ENCODE measurements at regions of chr14 and their contacts with region 1.

Region 1: DNA sequence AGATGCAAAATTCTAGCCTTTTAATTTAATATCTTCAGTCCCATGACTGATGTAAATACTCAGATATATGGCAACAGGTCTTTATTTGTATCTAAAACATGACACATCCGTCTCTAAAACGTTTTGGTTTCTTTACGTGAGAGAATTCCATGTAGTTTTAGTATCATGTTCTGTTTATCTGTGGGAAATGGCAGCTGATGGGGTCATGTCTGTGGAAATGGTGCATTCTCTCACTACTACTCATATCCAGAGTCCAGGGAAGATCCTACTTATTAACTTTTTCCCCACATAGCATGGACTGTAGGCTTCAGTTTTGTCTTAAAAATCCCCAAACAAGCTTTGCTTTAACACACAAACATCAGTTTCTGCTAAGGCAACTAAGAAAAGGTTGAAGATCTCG is 53.8 kb downstream of the SPTLC2 start:
- DNase-seq: peak; percentile 98
- ATAC-seq: peak; percentile 98
- H3K4me3 ChIP-seq: no peak overlapping the region
- H3K27ac ChIP-seq: peak overlapping the region; percentile 48; the same call in 1 of the 2 replicates
- H3K4me1 ChIP-seq: peaks cover 14% of the 10 kb centered on the region
- H3K27me3 ChIP-seq: no peaks in the 10 kb centered on the region
- CTCF ChIP-seq: no peak
- POLR2A ChIP-seq: 0 out of 2 replicates have a peak, but pooled peaks have one; percentile 21
- RAD21 ChIP-seq: no peak

Region 2: GRCh38 chr14:77372304-77372841 is 190.3 kb before region 1 on chr14:
- CTCF ChIA-PET with region 1: no interaction called
- POLR2A ChIA-PET with region 1: no interaction called
- dilution Hi-C with region 1: no loop called
- in situ Hi-C with region 1: no loop called
- intact Hi-C with region 1: no loop called
- DNase-seq: peak; percentile 88
- ATAC-seq: peak; percentile 18
- H3K4me3 ChIP-seq: no peak overlapping the region
- H3K27ac ChIP-seq: no peak overlapping the region
- H3K4me1 ChIP-seq: no peaks in the 10 kb centered on the region
- H3K27me3 ChIP-seq: peaks cover 6% of the 10 kb centered on the region
- CTCF ChIP-seq: no peak
- POLR2A ChIP-seq: no peak
- RAD21 ChIP-seq: no peak

Region 3: DNA sequence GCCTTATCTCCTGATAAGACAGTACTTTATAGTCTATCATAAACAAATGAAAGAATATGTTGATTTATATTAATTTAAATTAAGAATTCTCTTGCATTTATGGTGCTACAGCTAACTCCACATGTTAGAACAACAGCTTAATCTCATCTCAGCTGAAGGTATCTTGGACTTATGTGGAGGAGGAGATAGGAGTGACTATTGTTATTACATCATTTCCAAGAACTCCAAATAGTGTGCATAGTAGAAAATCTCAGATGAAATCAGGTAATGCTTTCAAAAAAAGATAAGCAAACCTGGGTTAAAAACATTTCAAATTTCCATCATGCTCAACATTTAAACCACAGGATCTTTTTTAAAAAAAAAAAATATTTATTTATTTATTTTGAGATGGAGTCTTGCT is 32.7 kb before region 1 on chr14:
- CTCF ChIA-PET with region 1: no interaction called
- POLR2A ChIA-PET with region 1: no interaction called
- dilution Hi-C with region 1: no loop called
- in situ Hi-C with region 1: no loop called
- intact Hi-C with region 1: no loop called
- DNase-seq: no peak
- ATAC-seq: no peak
- H3K4me3 ChIP-seq: no peak overlapping the region
- H3K27ac ChIP-seq: no peak overlapping the region; the same call in 1 of the 2 replicates
- H3K4me1 ChIP-seq: 0 out of 2 replicates have a peak, but pooled peaks cover 1% of the 10 kb centered on the region
- H3K27me3 ChIP-seq: no peaks in the 10 kb centered on the region
- CTCF ChIP-seq: no peak
- POLR2A ChIP-seq: no peak
- RAD21 ChIP-seq: no peak

Region 4: GRCh38 chr14:77574446-77575115 is 11.9 kb after region 1 on chr14:
- CTCF ChIA-PET with region 1: interaction called, 3 read pairs
- POLR2A ChIA-PET with region 1: interaction called, 5 read pairs
- dilution Hi-C with region 1: no loop called
- in situ Hi-C with region 1: no loop called
- intact Hi-C with region 1: loop called (anchors 1 kb)
- DNase-seq: peak; percentile 76
- ATAC-seq: peak; percentile 92
- H3K4me3 ChIP-seq: no peak overlapping the region
- H3K27ac ChIP-seq: peak overlapping the region; percentile 92; the same call in 1 of the 2 replicates
- H3K4me1 ChIP-seq: peaks cover 26% of the 10 kb centered on the region
- H3K27me3 ChIP-seq: no peaks in the 10 kb centered on the region
- CTCF ChIP-seq: no peak
- POLR2A ChIP-seq: no peak
- RAD21 ChIP-seq: no peak

Region 5: DNA sequence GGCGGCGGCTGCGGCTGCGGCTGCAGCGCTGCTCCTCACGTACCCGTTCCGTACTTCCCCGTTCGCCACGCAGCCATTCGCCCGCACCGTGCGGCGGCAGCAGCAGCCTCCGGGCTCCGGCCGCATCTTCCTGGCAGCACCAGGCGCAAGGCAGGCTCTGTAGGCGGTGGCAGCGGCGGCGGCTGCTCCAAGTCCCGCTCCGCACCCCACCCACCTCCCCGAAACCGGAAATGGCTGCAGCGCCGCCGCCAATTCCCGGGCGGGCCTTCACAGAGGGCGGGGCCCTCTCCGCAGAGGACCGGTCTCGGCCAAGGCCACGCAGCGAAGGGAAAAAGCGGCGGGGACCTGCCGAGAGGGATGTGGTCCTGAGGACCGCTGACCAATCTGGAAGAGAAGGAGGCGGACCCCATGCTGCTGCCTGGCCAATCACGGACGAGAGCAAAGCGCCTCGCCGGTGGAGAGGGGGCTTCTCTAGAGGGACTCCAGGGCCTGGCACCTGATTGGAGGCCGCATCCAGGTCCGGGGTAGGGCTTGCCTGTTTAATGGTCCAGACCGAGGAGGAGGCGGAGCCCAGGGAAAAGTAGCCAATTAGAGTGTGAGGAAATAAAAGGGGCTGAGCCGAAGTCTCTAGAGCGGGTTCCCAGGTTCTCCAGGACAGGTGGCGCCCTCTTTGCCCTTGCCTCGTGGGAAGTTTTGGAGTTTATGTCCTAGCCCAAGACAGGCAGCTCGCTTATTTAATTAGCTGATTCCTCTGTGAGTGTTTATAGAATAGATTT is 54.0 kb after region 1 on chr14 and contains the start of gene SPTLC2:
- CTCF ChIA-PET with region 1: interaction called, 6 read pairs
- POLR2A ChIA-PET with region 1: no interaction called
- dilution Hi-C with region 1: no loop called
- in situ Hi-C with region 1: no loop called
- intact Hi-C with region 1: loop called (anchors 5 kb)
- DNase-seq: peak; percentile 99
- ATAC-seq: peak; percentile 96
- H3K4me3 ChIP-seq: peak within 1 kb of the TSS; percentile 95
- H3K27ac ChIP-seq: peak within 1 kb of the TSS; percentile 69
- H3K4me1 ChIP-seq: no peaks in the 10 kb centered on the region
- H3K27me3 ChIP-seq: no peaks in the 10 kb centered on the region
- CTCF ChIP-seq: 0 out of 2 replicates have a peak, but pooled peaks have one; percentile 15
- POLR2A ChIP-seq: peak; percentile 84
- RAD21 ChIP-seq: no peak
- total RNA-seq, gene SPTLC2: 68.3 and 100.0 TPM in 2 replicates